ENCODE measurements at regions of chr1 and their contacts with region 1.

Region 1: DNA sequence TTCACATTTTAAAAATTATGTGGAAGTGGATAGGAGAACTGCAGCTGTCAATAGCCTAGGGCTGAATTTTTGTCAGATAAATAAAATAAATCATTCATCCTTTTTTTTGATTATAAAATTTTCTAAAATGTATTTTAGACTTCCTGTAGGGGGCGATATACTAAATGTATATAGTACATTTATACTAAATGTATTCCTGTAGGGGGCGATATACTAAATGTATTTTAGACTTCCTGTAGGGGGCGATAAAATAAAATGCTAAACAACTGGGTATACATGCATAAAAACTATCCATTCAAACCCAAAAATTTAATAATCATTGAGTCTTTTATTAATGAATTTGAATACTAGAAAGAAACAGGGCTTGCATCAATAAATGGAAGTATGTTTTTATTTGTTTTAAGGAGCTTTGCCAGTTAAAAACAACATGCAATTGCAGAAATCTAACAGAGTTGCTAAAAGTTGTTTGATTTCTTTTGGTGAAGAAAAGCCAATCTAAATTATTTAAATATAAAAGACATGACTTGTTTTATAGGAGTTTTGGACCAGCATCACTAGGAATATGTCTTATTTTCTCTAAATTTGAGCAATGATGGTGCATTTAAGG is 31.4 kb downstream of the CLCA1 start:
- DNase-seq: peak in 1 of 2 donors; percentile 57
- ATAC-seq: peak; percentile 81 to 89 (median 87)
- H3K4me3 ChIP-seq: no peak overlapping the region
- H3K4me3 Mint-ChIP-seq: no peak overlapping the region
- H3K27ac ChIP-seq: no peak overlapping the region
- H3K27ac Mint-ChIP-seq: no peak overlapping the region
- H3K4me1 ChIP-seq: peaks cover 18% of the 10 kb centered on the region
- H3K4me1 Mint-ChIP-seq: peaks cover 6 to 16% of the 10 kb centered on the region in 2 donors
- H3K27me3 ChIP-seq: no peaks in the 10 kb centered on the region
- H3K27me3 Mint-ChIP-seq: peaks cover 16 to 30% of the 10 kb centered on the region in 2 donors
- CTCF ChIP-seq: peak; percentile 100

Region 2: DNA sequence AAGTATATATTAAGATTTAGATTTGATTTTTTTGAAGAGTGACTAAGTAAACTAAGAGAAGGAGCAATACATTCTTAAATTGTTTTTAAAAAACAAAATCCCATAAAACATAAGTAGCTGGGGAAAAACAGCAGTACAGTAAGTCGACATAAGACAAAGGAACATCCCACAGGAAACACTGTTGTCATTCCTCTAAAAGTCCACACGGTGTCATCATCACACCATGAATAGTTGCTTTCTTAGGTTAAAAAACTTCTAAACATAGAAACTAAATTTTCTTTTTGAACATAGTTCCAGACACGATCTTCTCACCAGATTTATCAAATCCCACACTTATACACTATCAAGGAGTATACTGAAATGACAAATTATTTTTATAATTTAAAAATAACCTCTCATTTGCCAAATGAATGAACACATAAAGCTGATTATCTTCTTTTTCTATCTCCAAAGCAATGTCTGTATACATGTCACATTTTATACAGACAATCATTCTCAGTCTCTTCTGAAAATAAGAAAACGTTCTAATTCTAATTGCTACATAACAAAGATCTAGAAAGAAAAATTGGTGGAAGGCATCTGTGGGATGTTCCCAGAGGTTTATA is 119.7 kb before region 1 on chr1:
- intact Hi-C with region 1: loop called (anchors 1 kb)
- DNase-seq: peak in 1 of 2 donors; percentile 82
- ATAC-seq: peak; percentile 76 to 90 (median 81)
- H3K4me3 ChIP-seq: no peak overlapping the region
- H3K4me3 Mint-ChIP-seq: no peak overlapping the region
- H3K27ac ChIP-seq: no peak overlapping the region
- H3K27ac Mint-ChIP-seq: no peak overlapping the region
- H3K4me1 ChIP-seq: no peaks in the 10 kb centered on the region
- H3K4me1 Mint-ChIP-seq: peaks cover 0 to 8% of the 10 kb centered on the region in 2 donors
- H3K27me3 ChIP-seq: no peaks in the 10 kb centered on the region
- H3K27me3 Mint-ChIP-seq: no peaks in the 10 kb centered on the region
- CTCF ChIP-seq: peak; percentile 91

Region 3: DNA sequence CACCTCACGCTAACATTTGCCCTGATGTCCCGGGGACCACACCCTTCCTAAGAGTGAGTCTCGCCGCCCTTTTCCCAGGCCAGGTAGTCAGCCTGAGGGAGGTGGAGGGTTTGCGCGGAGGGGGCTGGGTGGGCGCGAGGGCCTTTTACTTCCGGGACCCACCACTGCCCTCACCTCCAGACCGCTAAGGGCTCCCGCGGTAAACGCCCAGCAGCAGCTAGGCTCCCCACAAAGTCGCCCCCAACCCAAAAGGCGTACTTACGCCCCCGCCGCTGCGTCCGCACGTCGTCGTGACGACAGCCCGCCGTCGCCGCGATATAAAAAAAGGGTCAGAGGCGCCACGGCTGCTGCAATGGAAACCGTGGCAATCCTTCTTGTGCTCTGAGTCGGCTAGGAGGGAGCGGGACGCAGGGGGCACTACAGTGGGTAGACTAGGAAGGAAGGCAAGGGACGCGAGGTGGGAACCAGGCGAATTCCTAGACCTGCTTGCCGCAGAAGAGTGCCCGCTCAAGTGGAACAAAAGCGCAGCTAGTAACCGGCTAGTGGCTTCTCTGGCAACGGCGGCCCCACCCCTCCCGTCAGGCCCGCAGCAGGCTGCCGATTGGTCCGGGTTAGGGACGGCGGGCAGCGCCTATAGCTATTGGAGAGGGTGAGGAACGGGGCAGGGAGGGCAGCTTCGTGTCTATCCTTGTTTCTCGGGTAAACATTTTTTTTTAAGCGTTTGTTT is 104.2 kb before region 1 on chr1 and contains the start of gene ODF2L:
- intact Hi-C with region 1: loop called (anchors 5 kb)
- DNase-seq: peak; percentile 85 to 89
- ATAC-seq: peak; percentile 99 to 100 (median 100)
- H3K4me3 ChIP-seq: peak within 1 kb of the TSS; percentile 86
- H3K4me3 Mint-ChIP-seq: peak within 1 kb of the TSS; percentile 94
- H3K27ac ChIP-seq: peak within 1 kb of the TSS; percentile 87
- H3K27ac Mint-ChIP-seq: peak within 1 kb of the TSS; percentile 90 to 96
- H3K4me1 ChIP-seq: peaks cover 15% of the 10 kb centered on the region
- H3K4me1 Mint-ChIP-seq: peaks cover 35 to 37% of the 10 kb centered on the region in 2 donors
- H3K27me3 ChIP-seq: no peaks in the 10 kb centered on the region
- H3K27me3 Mint-ChIP-seq: peaks cover 0 to 5% of the 10 kb centered on the region in 2 donors
- CTCF ChIP-seq: no peak
- total RNA-seq, gene ODF2L: 79.7 to 102 (median 82.0) TPM

Region 4: DNA sequence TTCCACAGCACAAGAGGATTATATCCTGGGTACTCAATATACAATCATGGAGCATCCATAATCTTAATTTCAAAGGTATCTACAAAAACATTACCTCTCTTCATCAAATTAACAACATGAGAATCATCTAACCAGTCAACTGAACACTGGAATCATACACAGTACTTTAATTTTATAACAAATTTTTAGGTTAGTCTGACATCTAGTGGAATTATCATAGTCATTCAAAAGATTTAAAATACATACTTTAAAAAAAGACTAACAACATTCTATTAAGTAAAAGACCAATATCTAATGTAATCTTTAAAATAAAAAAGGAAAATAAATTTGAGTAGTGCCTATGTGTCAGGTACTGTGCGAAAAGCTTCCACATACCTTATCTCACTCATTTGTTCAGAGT is 187.5 kb after region 1 on chr1:
- intact Hi-C with region 1: loop called (anchors 5 kb)
- DNase-seq: no peak
- ATAC-seq: peak in 2 of 3 donors; percentile 49 to 50
- H3K4me3 ChIP-seq: no peak overlapping the region
- H3K4me3 Mint-ChIP-seq: no peak overlapping the region
- H3K27ac ChIP-seq: no peak overlapping the region
- H3K27ac Mint-ChIP-seq: no peak overlapping the region
- H3K4me1 ChIP-seq: no peaks in the 10 kb centered on the region
- H3K4me1 Mint-ChIP-seq: no peaks in the 10 kb centered on the region
- H3K27me3 ChIP-seq: no peaks in the 10 kb centered on the region
- H3K27me3 Mint-ChIP-seq: no peaks in the 10 kb centered on the region
- CTCF ChIP-seq: peak; percentile 49

Region 5: DNA sequence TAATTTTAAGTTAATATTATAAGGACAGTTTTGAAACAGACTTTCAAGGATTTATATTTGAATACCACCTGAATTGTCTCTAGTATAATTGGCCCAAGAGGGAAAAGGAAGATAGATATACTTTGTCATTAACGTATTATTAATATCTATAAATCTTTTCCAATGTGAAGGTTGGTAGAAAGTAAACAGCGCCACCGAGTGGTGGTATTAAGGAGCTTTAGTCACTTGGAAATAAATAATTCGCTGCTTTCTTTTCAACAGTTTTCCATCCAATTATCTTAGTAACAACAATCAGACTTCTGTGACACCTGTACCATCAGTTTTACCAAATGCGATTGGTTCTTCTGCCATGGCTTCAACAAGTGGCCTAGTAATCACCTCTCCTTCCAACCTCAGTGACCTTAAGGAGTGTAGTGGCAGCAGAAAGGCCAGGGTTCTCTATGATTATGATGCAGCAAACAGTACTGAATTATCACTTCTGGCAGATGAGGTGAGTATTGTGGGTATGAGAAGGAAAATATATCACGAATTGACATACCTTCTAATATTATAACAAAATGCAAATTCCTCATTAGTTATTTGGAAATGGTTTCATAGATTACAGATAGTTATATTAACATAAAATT is 242.0 kb after region 1 on chr1:
- intact Hi-C with region 1: loop called (anchors 1 kb)
- DNase-seq: peak in 1 of 2 donors; percentile 77
- ATAC-seq: no peak
- H3K4me3 ChIP-seq: no peak overlapping the region
- H3K4me3 Mint-ChIP-seq: no peak overlapping the region
- H3K27ac ChIP-seq: no peak overlapping the region
- H3K27ac Mint-ChIP-seq: no peak overlapping the region
- H3K4me1 ChIP-seq: peaks cover 5% of the 10 kb centered on the region
- H3K4me1 Mint-ChIP-seq: peaks cover 0 to 12% of the 10 kb centered on the region in 2 donors
- H3K27me3 ChIP-seq: no peaks in the 10 kb centered on the region
- H3K27me3 Mint-ChIP-seq: no peaks in the 10 kb centered on the region
- CTCF ChIP-seq: peak; percentile 80